ENCODE measurements at regions of chr10 and their contacts with region 1.

Region 1: GRCh38 chr10:60646966-60647796 is 131.1 kb upstream of the CDK1 start:
- DNase-seq: peak; percentile 18
- H3K4me3 Mint-ChIP-seq: no peak overlapping the region
- H3K27ac Mint-ChIP-seq: no peak overlapping the region
- H3K4me1 Mint-ChIP-seq: peaks cover 60% of the 10 kb centered on the region
- H3K27me3 Mint-ChIP-seq: no peaks in the 10 kb centered on the region

Region 2: DNA sequence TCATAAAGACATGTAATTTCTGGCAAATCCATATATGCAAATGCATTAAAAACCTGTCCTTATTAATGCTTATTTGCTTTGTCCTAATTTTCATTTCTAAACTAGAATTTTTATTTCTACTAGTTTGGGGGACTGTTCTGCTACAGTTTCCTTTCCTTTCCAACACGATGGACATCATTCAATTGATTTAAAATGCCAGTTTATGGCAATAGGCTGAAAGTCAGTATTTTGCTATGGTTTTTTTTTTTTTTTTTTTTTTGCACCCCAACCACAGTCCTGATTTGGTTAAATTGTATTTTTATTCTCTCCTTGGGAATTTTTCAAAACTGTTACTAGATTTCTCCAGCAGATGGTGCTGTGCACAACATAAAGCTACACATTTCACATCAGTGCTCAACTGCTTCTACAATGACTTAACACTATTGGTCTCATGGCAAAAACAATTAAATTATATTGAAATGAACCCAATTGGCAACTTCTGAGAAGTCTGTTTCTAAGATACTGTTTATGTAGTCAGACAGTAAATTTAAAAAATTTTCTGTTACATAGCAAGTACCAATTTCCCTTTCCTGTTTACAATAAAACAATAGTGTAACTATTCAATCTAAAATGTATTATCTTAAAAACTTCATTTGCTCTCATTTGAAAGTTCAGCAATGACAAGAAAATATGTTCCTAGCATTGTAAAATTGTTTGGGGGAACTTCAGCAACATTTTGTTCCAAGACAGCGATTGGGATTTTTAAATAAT is 547.0 kb before region 1 on chr10:
- intact Hi-C with region 1: loop called (anchors 1 kb)
- DNase-seq: no peak
- H3K4me3 Mint-ChIP-seq: no peak overlapping the region
- H3K27ac Mint-ChIP-seq: no peak overlapping the region
- H3K4me1 Mint-ChIP-seq: no peaks in the 10 kb centered on the region
- H3K27me3 Mint-ChIP-seq: no peaks in the 10 kb centered on the region

Region 3: DNA sequence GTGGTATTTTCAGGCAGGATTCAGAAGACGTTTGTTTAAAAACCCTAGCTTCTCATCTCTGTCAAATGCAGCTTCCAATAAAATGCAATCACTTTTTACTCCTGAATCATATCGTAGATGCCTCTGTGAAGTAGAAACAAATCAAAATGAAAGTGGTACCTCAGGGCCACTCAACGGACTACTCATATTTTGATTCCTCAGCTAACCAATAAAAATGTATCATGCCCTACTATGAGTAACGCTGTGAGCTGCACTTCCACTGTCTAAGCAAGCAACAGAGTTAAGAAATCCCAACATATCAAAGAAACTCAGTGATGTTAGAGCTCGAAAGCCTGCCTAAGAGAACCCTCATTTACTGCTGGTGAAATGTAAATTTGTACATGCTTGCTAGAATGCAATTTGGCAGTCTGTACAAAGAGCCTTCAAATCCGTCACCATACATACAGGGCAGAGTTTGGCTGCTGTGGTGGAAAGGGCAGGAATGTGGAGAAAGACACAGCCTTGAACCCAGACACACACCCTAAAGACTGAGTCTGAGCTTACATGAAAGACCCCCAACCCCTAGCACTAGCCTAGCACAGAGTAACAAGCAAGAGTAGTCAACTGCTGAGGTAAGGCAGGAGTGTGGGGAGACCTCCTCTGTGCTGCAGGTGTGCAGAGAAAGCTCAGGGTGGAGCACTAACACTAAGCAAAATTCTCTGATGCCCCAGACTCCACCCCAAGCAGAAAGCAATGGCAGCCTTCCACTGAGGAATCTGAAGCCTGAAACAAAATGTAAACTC is 409.0 kb before region 1 on chr10:
- intact Hi-C with region 1: loop called (anchors 10 kb)
- DNase-seq: no peak
- H3K4me3 Mint-ChIP-seq: peak overlapping the region; percentile 27
- H3K27ac Mint-ChIP-seq: peak overlapping the region; percentile 33
- H3K4me1 Mint-ChIP-seq: peaks cover 30% of the 10 kb centered on the region
- H3K27me3 Mint-ChIP-seq: no peaks in the 10 kb centered on the region

Region 4: GRCh38 chr10:60549686-60550085 is 97.5 kb before region 1 on chr10:
- intact Hi-C with region 1: loop called (anchors 1 kb)
- DNase-seq: no peak
- H3K4me3 Mint-ChIP-seq: no peak overlapping the region
- H3K27ac Mint-ChIP-seq: no peak overlapping the region
- H3K4me1 Mint-ChIP-seq: no peaks in the 10 kb centered on the region
- H3K27me3 Mint-ChIP-seq: no peaks in the 10 kb centered on the region

Region 5: GRCh38 chr10:60733189-60733822 is 86.1 kb after region 1 on chr10:
- intact Hi-C with region 1: loop called (anchors 5 kb)
- DNase-seq: peak; percentile 36
- H3K4me3 Mint-ChIP-seq: no peak overlapping the region
- H3K27ac Mint-ChIP-seq: no peak overlapping the region
- H3K4me1 Mint-ChIP-seq: peaks cover 48% of the 10 kb centered on the region
- H3K27me3 Mint-ChIP-seq: peaks cover 4% of the 10 kb centered on the region

Measured in activated T-helper 1 cell treated with anti-CD3 and anti-CD28 coated beads, Interleukin-12 subunit alpha, Interleukin-12 subunit beta, Interleukin-2, Interleukin-4 antibody, amounts not matched to agents 30 ng/mL and 10 ng/mL and 1 ng/mL, durations not matched to agents 14 hours and 24 hours and 36 hours (primary cell).